ENCODE measurements at regions of chr12 and their contacts with region 1.

Region 1: DNA sequence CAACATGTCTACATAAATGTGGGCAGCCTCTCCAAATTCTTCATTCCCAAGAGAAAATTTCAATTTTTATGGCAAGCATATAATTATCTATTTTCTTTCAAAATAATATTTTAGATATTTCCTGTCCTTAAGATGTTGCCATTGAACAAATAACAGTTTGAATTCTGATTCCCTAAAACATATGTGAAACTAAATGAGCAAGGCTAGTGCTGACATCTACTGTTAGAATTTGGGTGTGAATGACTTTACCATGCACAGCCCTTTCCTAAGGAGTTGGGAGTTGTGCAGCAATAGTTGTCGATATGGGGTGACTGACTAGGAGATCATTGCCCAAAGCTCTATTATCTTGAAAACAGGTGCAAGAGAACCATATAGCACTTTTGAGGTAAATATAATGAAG is 108.2 kb upstream of the SLC38A4 start:
- DNase-seq: no peak
- H3K4me3 ChIP-seq: no peak overlapping the region
- H3K27ac ChIP-seq: no peak overlapping the region
- H3K4me1 ChIP-seq: no peaks in the 10 kb centered on the region
- H3K27me3 ChIP-seq: no peaks in the 10 kb centered on the region
- CTCF ChIP-seq: peak; percentile 41 to 55 (median 45)
- EP300 ChIP-seq: no peak
- POLR2A ChIP-seq: no peak

Region 2: GRCh38 chr12:46342562-46343033 is 591.3 kb before region 1 on chr12:
- in situ Hi-C with region 1: loop called in 2 of 4 experiments (anchors 25 kb)
- intact Hi-C with region 1: no loop called
- DNase-seq: peak; percentile 15
- H3K4me3 ChIP-seq: no peak overlapping the region
- H3K27ac ChIP-seq: no peak overlapping the region
- H3K4me1 ChIP-seq: no peaks in the 10 kb centered on the region
- H3K27me3 ChIP-seq: no peaks in the 10 kb centered on the region
- CTCF ChIP-seq: peak; percentile 41 to 54 (median 53)
- EP300 ChIP-seq: no peak
- POLR2A ChIP-seq: no peak

Region 3: DNA sequence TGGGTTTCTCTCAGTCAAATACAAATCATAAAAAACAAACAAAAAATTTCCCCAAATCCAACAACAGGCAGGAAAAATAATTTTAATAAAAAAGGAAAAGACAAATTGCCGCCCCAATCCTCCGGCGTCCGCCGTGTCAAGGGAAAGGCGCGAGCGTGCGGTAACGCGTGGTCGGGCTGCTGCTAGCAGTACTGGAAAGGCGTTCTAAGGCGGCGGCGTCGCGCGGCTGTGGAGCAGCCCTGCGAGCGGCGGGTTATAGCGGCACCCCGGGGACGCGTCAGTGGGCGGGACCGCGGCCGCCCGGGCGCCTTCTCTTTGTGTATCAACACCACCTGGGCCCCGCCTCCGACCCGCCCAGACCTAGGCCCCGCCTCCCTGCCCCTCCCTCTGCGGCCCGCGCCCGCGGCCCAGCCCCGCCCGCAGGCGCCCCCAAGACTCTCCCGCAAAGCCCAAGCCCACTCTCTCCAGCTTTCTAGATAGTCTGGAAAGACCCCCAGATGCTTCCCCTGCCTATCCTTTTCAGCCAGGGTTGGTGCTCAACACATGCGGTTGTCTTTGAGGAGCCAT is 561.3 kb before region 1 on chr12 and contains the start of gene SLC38A2:
- in situ Hi-C with region 1: loop called in 1 of 4 experiments (anchors 25 kb)
- intact Hi-C with region 1: no loop called
- DNase-seq: peak; percentile 99
- H3K4me3 ChIP-seq: peak within 1 kb of the TSS; percentile 96 to 99 (median 98)
- H3K27ac ChIP-seq: peak within 1 kb of the TSS; percentile 99 to 100 (median 100)
- H3K4me1 ChIP-seq: peaks cover 23 to 40% (median 32%) of the 10 kb centered on the region in 4 donors
- H3K27me3 ChIP-seq: no peaks in the 10 kb centered on the region
- CTCF ChIP-seq: no peak
- EP300 ChIP-seq: no peak
- POLR2A ChIP-seq: peak; percentile 100
- total RNA-seq, gene SLC38A2: 104 to 300 (median 229) TPM

Region 4: DNA sequence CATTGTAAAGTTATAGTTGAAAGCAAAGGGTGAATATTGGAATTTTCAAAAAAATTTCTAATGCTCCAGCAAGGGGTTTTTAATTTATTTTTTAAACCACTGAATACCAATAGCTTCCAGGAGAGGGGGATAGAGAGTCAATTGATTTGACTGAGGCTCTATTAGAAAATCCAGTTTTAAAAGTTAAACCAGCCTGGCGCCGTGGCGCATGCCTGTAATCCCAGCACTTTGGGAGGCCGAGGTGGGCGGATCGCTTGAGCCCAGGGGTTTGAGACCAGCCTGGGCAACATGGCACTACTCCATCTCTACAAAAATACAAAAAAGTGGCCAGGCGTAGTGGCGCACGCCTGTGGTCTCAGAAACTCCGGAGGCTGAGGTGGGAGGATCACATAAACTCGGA is 258.2 kb before region 1 on chr12:
- in situ Hi-C with region 1: loop called (anchors 10 to 25 kb)
- intact Hi-C with region 1: loop called (anchors 5 kb)
- DNase-seq: no peak
- H3K4me3 ChIP-seq: no peak overlapping the region
- H3K27ac ChIP-seq: no peak overlapping the region
- H3K4me1 ChIP-seq: peaks cover 0 to 4% (median 1%) of the 10 kb centered on the region in 4 donors
- H3K27me3 ChIP-seq: no peaks in the 10 kb centered on the region
- CTCF ChIP-seq: peak; percentile 66 to 81 (median 70)
- EP300 ChIP-seq: no peak
- POLR2A ChIP-seq: no peak

Region 5: DNA sequence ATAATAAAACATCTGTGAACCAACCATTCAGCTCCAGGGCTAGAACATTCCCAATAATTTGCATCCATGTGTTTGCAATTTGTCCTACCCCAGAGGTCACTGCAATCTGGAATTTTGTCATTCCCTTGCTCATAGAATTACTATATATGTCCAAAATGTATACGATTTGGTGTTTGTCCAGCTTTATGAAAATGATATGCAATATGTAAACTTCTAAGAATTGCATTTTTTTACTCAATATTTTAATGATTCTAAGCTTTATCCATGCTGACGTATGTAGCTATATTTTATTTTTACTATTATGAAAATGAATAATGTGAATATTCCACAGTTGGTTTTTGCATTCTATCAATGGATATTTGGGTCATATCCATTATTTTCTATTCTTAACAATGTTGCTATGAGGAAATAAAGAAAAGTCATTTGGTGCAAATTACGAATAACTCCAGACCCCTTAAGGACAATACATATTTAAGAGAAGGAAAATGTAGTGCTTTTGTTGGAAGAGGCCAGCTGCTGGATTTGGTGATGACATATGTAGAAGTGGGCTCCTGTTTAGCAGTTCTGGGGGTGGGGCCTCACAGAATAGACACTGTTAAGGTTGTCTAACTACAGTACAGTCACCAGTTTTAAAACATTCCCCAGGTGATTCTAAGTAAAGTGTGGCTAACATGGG is 247.5 kb before region 1 on chr12:
- in situ Hi-C with region 1: loop called in 1 of 4 experiments (anchors 25 kb)
- intact Hi-C with region 1: loop called (anchors 5 kb)
- DNase-seq: no peak
- H3K4me3 ChIP-seq: no peak overlapping the region
- H3K27ac ChIP-seq: no peak overlapping the region
- H3K4me1 ChIP-seq: no peaks in the 10 kb centered on the region
- H3K27me3 ChIP-seq: no peaks in the 10 kb centered on the region
- CTCF ChIP-seq: no peak
- EP300 ChIP-seq: no peak
- POLR2A ChIP-seq: no peak

Measured in transverse colon (tissue), 4 donors.